ENCODE measurements at regions of chr15 and their contacts with region 1.

Region 1: GRCh38 chr15:58770857-58771620 is at the start of gene MINDY2:
- H3K4me3 Mint-ChIP-seq: peak within 1 kb of the TSS; percentile 96
- H3K27ac Mint-ChIP-seq: peak within 1 kb of the TSS; percentile 96
- H3K4me1 Mint-ChIP-seq: peaks cover 23% of the 10 kb centered on the region
- H3K27me3 Mint-ChIP-seq: no peaks in the 10 kb centered on the region

Region 2: DNA sequence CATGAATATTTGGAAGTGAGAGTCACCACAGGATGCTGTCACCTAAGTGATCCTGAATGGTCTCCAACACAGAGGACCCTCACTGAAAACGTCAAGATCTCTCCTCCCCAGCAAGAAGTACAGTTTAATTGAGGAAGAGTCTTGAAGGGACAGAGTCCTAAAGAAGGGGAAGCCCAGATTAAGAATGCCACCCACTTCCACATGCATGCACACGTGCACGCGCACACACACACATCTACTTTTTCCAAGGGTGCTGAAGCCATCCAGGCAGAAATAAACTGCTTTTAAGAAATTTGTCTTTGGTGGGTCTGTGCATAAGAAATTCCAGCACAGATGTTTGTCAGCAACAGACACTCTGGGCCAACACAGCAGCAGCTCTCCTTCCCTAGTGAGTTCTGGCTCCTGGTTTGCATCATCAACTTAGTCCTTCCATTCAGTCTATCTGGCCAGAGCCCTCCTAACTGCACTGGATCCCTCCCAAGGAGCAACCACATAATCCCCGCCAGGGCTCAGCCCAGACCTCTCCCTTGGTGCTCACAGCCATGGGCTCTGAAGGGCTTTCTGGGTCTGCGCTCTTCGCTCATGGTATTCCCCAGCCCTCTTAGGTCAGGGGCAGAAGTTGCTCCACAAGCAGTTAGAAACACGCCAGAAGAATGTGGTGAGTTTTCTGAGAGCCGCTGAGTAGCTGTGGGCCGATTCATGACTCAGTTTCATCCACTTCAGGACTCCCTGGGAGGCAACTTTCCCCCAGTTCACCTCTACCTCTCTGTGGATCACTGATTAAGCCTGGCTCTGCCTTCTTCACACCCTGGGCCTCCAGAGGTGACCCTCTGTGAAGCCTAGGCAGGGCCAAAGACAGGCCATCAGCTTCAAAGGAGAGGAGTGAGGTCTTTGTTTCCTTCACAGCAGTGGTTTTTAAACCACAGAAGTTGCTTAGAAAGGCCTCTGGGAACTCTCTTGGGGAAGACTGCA is 471.9 kb before region 1 on chr15:
- intact Hi-C with region 1: no loop called
- H3K4me3 Mint-ChIP-seq: no peak overlapping the region
- H3K27ac Mint-ChIP-seq: peak overlapping the region; percentile 61
- H3K4me1 Mint-ChIP-seq: peaks cover 32% of the 10 kb centered on the region
- H3K27me3 Mint-ChIP-seq: peaks cover 3% of the 10 kb centered on the region

Region 3: GRCh38 chr15:58515807-58516206 is 255.2 kb before region 1 on chr15:
- intact Hi-C with region 1: no loop called
- H3K4me3 Mint-ChIP-seq: no peak overlapping the region
- H3K27ac Mint-ChIP-seq: peak overlapping the region; percentile 24
- H3K4me1 Mint-ChIP-seq: peaks cover 66% of the 10 kb centered on the region
- H3K27me3 Mint-ChIP-seq: peaks cover 2% of the 10 kb centered on the region

Region 4: GRCh38 chr15:58724466-58724865 is 46.6 kb before region 1 on chr15:
- intact Hi-C with region 1: no loop called
- H3K4me3 Mint-ChIP-seq: no peak overlapping the region
- H3K27ac Mint-ChIP-seq: peak overlapping the region; percentile 49
- H3K4me1 Mint-ChIP-seq: peaks cover 31% of the 10 kb centered on the region
- H3K27me3 Mint-ChIP-seq: no peaks in the 10 kb centered on the region

Region 5: GRCh38 chr15:58738046-58738707 is 32.9 kb before region 1 on chr15:
- intact Hi-C with region 1: no loop called
- H3K4me3 Mint-ChIP-seq: no peak overlapping the region
- H3K27ac Mint-ChIP-seq: peak overlapping the region; percentile 40
- H3K4me1 Mint-ChIP-seq: peaks cover 62% of the 10 kb centered on the region
- H3K27me3 Mint-ChIP-seq: no peaks in the 10 kb centered on the region

Region 6: GRCh38 chr15:58749532-58750337 is 21.3 kb before region 1 on chr15 and contains the start of gene ADAM10:
- intact Hi-C with region 1: loop called (anchors 1 kb)
- H3K4me3 Mint-ChIP-seq: peak within 1 kb of the TSS; percentile 100
- H3K27ac Mint-ChIP-seq: peak within 1 kb of the TSS; percentile 93
- H3K4me1 Mint-ChIP-seq: peaks cover 24% of the 10 kb centered on the region
- H3K27me3 Mint-ChIP-seq: no peaks in the 10 kb centered on the region